ENCODE measurements at regions of chr14 and their contacts with region 1.

Region 1: DNA sequence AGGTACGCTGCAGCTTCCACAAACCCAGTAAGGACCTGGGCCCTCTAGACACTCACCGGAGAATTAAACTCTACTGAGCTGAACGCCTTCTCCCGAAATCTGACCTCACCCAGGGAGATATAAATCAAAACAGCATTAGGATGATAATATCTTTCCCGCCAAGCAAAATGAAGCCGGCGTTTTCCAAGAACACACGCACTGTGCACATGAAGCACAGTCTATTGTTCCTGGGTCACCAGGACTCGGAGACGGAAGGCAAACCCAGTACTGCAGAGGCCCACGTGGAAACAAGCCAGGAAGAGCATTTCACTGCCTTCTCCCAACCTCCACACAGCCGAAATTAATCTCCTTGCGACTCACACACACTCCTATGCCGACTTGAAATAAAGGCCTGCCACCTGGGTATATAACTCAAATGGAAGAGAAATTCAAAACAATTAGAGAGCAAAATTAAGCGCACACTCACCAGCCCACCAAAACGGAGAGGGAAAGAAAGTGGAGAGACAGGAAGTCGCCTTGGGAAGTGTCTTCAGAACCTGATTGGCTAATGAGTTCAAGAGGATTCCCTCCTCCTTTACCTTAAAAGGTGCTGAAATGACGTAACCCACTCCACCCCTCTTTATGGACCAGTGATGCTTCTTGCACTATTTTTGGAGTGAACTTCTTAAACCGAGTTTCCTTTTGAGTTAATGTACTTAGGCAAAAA is at the start of gene CCNB1IP1:
- DNase-seq: peak; percentile 69 to 76
- H3K4me3 ChIP-seq: peak within 1 kb of the TSS; percentile 60
- H3K4me3 Mint-ChIP-seq: peak within 1 kb of the TSS; percentile 96
- H3K27ac Mint-ChIP-seq: peak within 1 kb of the TSS; percentile 96
- H3K4me1 ChIP-seq: peaks cover 10% of the 10 kb centered on the region; the same call in 1 of the 2 replicates
- H3K4me1 Mint-ChIP-seq: peaks cover 22% of the 10 kb centered on the region
- H3K27me3 ChIP-seq: no peaks in the 10 kb centered on the region
- H3K27me3 Mint-ChIP-seq: no peaks in the 10 kb centered on the region
- CTCF ChIP-seq: no peak
- total RNA-seq, gene CCNB1IP1: 111 and 118 TPM in 2 replicates

Region 2: DNA sequence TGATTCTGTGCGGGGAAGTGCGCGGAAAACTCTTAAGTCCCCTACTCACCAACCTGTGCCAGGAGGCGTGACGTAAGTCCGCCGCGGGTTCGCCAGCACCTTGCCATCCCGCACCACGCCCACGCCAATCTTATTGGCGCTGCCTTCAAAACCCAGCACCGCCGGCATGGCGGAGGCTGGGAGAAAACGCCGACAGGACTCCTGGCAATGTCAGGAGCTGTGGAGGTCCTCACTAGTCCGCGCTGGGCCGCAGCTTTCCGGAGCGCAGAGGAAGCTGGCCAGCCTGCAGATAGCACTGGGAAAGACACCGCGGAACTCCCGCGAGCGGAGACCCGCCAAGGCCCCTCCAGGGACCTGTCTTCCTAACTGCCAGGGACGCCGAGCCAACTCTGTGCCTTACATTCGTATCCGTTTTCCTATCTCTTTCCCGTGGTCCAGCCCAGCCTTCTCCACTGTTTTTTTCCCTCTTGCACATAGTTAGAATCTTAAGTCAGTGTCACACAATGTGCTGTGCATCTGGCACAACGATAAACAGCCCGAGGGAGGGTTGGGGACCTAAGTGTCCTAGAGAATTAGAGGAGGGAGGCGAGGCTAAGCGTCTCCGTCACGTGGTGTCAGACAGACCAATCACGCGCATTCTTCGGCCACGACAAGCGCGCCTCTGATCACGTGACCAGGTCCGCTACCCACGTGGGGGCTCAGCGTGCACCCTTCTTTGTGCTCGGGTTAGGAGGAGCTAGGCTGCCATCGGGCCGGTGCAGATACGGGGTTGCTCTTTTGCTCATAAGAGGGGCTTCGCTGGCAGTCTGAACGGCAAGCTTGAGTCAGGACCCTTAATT is 121.8 kb after region 1 on chr14 and contains the starts of genes APEX1 and OSGEP:
- CTCF ChIA-PET with region 1: no interaction called
- POLR2A ChIA-PET with region 1: interaction called, 3 read pairs
- intact Hi-C with region 1: loop called (anchors 2 kb)
- DNase-seq: peak; percentile 97 to 99
- H3K4me3 ChIP-seq: peak within 1 kb of the TSS; percentile 63
- H3K4me3 Mint-ChIP-seq: no peak within 1 kb of the TSS
- H3K27ac Mint-ChIP-seq: no peak within 1 kb of the TSS
- H3K4me1 ChIP-seq: no peaks in the 10 kb centered on the region
- H3K4me1 Mint-ChIP-seq: peaks cover 1% of the 10 kb centered on the region
- H3K27me3 ChIP-seq: no peaks in the 10 kb centered on the region
- H3K27me3 Mint-ChIP-seq: no peaks in the 10 kb centered on the region
- CTCF ChIP-seq: no peak
- total RNA-seq, gene APEX1: 176 and 185 TPM in 2 replicates
- total RNA-seq, gene OSGEP: 63.1 and 64.3 TPM in 2 replicates

Measured in Caco-2 (cell line).